Lower lobe of right lung (tissue), 2 donors: ENCODE measurements at regions of chr9 and their contacts with region 1.

Region 1: GRCh38 chr9:27033823-27034403 is 28.4 kb upstream of the LRRC19 start:
- DNase-seq: no peak
- ATAC-seq: peak; percentile 59 to 69
- H3K4me3 ChIP-seq: no peak overlapping the region
- H3K27ac ChIP-seq: no peak overlapping the region
- H3K4me1 ChIP-seq: no peaks in the 10 kb centered on the region
- H3K27me3 ChIP-seq: no peaks in the 10 kb centered on the region
- CTCF ChIP-seq: peak; percentile 81

Region 2: DNA sequence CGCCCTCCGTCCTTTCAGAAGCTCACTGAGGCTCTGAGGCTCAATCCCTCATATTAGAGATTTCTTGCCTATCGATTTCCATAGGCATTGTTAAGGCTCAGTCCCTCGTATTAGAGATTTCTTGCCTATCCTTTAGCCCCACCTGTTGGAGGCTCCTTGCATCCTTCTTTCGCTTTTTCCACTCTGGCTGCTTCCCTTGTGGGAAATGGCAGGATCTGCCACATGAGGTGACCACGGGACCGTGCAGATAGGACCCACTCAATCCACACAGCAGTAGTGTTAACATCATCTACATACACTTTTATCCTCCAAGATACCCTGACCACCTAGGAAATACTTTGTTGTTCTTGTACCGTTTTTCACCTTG is 58.2 kb before region 1 on chr9:
- intact Hi-C with region 1: loop called (anchors 10 kb)
- DNase-seq: no peak
- ATAC-seq: peak; percentile 32 to 59
- H3K4me3 ChIP-seq: no peak overlapping the region
- H3K27ac ChIP-seq: no peak overlapping the region
- H3K4me1 ChIP-seq: no peaks in the 10 kb centered on the region
- H3K27me3 ChIP-seq: no peaks in the 10 kb centered on the region
- CTCF ChIP-seq: peak; percentile 56

Region 3: DNA sequence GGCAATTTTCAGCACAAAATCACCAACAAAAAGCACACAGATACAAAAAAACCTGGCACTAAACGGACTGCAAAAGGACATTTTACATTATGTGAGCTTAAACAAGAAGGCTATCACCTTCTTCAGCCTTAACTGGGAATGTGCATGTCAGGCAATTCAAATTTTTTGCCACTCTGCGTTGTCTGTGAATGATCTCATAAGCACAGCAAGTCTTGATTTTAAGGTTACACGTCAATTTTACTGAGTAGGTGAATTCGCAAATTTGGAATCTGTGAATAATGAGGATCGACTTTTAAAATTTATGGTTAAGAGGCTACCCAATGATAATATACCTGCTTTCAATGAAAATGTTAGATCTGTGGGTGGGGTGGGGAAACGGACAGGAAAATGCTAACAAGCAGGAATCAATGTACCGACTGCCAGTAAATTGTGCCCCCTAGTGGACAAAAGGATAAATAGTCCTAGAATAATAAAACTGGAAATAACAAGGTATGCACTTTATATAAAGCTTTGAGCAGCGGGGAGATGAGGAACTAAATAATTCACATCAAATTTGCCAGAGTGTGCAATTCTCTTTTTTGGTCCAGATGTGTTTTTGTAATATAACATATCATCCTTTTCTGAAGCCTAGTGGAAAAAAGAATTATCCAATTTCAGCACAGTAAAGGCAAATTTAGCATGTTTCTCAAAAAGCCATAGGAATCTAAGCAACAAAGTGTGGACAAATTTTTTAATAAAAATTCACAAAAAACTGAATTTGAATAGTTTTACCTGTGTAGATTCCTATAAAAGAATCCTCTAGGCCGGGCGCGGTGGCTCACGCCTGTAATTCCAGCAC is 242.5 kb after region 1 on chr9:
- intact Hi-C with region 1: loop called (anchors 5 kb)
- DNase-seq: no peak
- ATAC-seq: peak; percentile 72 to 79
- H3K4me3 ChIP-seq: peak overlapping the region; percentile 22
- H3K27ac ChIP-seq: no peak overlapping the region
- H3K4me1 ChIP-seq: peaks cover 12% of the 10 kb centered on the region
- H3K27me3 ChIP-seq: no peaks in the 10 kb centered on the region
- CTCF ChIP-seq: peak; percentile 73